Motor neuron (in vitro differentiated cells): ENCODE measurements at regions of chr6 and their contacts with region 1.

Region 1: GRCh38 chr6:28981833-28982475 is 23.2 kb downstream of the ZNF311 start:
- ATAC-seq: peak; percentile 45 to 74 (median 60)
- H3K4me3 ChIP-seq: peak overlapping the region; percentile 60 to 81 (median 72)
- H3K27ac ChIP-seq: peak overlapping the region in 1 of 2 donors; percentile 46
- H3K4me1 ChIP-seq: peaks cover 0 to 4% of the 10 kb centered on the region in 2 donors

Region 2: DNA sequence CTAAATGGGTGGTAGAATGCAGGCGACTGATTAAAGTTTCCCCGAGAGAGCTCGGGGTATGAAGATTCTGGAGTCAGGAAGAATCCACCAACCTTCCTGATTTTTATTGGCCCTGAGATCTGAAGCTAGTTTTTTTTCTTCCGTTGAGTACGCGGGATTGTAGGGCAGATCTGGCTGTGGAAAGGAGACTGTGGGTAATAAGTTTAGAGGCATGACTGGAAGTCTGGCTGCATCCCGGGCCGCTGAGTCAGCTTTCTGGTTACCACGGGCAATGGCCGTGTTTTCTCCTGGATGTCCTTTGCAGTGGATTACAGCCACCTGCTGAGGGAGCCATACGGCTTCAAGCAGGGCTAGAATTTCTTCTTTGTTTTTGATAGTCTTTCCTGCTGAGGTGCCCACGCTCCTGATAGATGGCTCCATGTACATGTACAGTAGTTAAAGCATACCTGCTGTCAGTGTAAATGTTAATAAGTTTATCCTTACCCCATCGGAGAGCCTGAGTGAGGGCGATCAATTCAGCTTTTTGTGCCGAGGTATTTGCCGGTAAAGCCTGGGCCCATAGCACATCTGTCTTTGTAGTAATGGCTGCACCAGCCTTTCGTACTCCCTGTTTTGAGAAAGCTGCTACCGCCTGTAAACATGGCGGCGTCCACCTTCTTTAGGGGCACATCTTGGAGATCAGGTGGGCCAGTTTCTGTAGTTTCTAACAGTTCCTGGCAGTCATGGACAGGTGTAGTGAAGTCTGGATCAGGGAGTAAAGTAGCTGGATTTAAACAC is 212.1 kb before region 1 on chr6:
- in situ Hi-C with region 1: no loop called
- ATAC-seq: peak in 4 of 8 experiments; percentile 45 to 84 (median 60)
- H3K4me3 ChIP-seq: no peak overlapping the region
- H3K27ac ChIP-seq: no peak overlapping the region
- H3K4me1 ChIP-seq: no peaks in the 10 kb centered on the region

Region 3: DNA sequence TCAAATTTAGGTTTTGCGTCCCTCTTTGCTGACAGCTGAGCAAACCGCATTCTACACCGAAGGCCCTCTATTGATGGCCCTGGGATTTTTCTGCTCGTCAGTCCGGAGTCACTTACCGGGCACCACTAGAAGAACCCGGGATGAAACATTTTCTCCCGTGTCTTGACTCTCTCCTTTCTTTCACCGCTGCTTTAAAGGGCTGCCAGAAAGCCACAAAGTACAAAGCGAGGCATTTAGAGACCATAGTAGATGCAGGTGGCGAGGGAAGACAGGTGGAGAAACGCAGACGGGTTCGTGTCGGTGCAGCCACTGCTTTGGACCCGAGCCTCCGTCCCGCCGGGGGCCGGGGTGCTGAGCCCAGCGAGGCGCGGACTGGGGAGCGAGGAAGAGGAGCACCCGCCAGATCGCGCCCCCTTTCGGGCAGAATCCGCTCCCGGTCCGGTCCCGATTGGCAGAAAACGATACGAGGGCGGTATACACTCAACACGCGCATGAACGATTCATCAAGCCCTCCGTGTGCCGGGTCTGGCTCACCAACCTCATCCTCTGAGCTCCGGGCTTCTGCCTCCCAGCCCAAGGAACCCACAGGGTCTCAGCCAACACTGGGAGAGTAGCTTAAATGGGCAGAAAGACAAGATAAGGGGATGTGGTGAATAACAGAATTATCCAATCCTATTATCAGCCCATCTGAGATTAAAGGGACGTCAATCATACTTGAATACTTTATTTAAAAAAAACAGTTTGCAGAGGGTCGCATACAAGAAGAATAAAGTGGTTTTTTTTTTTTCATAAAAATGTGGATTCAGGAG is 143.1 kb before region 1 on chr6:
- in situ Hi-C with region 1: loop called in 1 of 9 experiments (anchors 25 kb)
- ATAC-seq: peak; percentile 88 to 94 (median 90)
- H3K4me3 ChIP-seq: peak overlapping the region; percentile 57 to 85 (median 69)
- H3K27ac ChIP-seq: peak overlapping the region; percentile 30 to 46
- H3K4me1 ChIP-seq: peaks cover 0 to 5% of the 10 kb centered on the region in 2 donors

Region 4: DNA sequence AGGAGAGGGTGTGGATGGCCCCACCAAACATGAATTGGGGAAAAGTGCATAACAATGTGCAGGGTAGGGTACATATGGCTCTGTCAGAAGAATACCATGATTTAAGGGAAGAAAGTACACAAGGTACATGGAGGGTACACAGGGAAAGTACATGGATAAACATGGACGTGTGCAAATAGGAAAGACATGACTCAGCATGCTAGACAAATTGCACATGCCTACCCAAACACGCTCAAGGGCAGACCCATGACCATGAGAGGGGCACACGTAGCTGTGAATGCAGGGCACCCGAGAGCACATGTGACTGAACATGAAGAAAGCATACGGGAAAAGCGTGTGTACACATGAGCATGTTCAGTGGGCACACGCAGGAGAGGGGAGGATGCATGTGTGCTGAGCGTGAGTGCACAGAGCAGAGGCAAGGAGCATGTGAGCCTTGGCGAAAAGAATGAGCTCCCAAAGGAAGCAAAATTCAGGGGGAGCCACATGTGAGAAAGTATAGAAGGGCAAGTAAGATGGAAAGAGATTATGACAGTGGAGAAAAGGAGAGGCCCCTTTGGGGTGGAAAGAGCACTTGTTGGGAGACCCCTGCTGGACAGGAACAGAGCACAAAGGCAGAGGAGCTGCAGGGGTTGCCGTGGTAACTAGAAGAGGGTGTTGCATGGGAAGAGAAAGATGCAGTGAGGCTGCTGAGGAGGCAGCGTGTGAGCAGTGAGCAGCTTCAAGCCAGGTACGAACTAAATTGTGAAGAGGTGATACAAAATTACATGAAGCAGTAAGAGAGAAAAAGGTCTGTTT is 620.8 kb after region 1 on chr6:
- in situ Hi-C with region 1: loop called in 1 of 9 experiments (anchors 25 kb)
- ATAC-seq: peak; percentile 31 to 99 (median 97)
- H3K4me3 ChIP-seq: no peak overlapping the region
- H3K27ac ChIP-seq: no peak overlapping the region
- H3K4me1 ChIP-seq: peaks cover 8 to 9% of the 10 kb centered on the region in 2 donors